CD4-positive, alpha-beta memory T cell (primary cell): ENCODE measurements at regions of chr3 and their contacts with region 1.

Region 1: GRCh38 chr3:100334488-100335351 is at the start of gene NIT2:
- DNase-seq: peak; percentile 74 to 80 (median 75)
- H3K4me3 ChIP-seq: peak within 1 kb of the TSS; percentile 54 to 71
- H3K4me3 Mint-ChIP-seq: peak within 1 kb of the TSS; percentile 89 to 96 (median 96)
- H3K27ac ChIP-seq: peak within 1 kb of the TSS; percentile 67
- H3K27ac Mint-ChIP-seq: peak within 1 kb of the TSS; percentile 83 to 97 (median 95)
- H3K4me1 ChIP-seq: peaks cover 14% of the 10 kb centered on the region
- H3K4me1 Mint-ChIP-seq: peaks cover 16 to 40% (median 18%) of the 10 kb centered on the region in 4 donors
- H3K27me3 ChIP-seq: no peaks in the 10 kb centered on the region
- H3K27me3 Mint-ChIP-seq: no peaks in the 10 kb centered on the region
- total RNA-seq, gene NIT2: 30.5 to 32.6 TPM

Region 2: DNA sequence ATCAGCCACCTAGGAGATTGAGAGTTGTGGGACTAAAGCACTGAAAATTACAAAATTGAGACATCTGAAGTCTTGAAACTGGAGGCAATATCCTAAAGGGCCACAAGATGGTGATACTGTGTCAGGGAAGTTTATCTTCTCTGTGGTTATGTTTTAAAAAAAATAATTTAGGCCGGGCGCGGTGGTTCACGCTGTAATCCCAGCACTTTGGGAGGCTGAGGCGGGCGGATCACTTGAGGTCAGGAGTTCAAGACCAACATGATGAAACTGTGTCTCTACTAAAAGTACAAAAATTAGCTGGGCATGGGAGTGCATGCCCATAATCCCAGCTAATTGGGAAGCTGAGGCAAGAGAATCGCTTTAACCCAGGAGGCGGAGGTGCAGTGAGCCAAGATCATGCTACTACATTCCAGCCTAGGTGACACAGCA is 18.1 kb before region 1 on chr3:
- CTCF ChIA-PET with region 1: interaction called, 9 read pairs
- POLR2A ChIA-PET with region 1: interaction called, 3 read pairs
- intact Hi-C with region 1: loop called (anchors 2 kb)
- DNase-seq: peak; percentile 42 to 48 (median 44)
- H3K4me3 ChIP-seq: no peak overlapping the region
- H3K4me3 Mint-ChIP-seq: peak overlapping the region in 4 of 8 donors; percentile 23 to 50 (median 40)
- H3K27ac ChIP-seq: no peak overlapping the region
- H3K27ac Mint-ChIP-seq: peak overlapping the region in 6 of 7 donors; percentile 2 to 70 (median 60)
- H3K4me1 ChIP-seq: peaks cover 11% of the 10 kb centered on the region
- H3K4me1 Mint-ChIP-seq: peaks cover 5 to 17% (median 9%) of the 10 kb centered on the region in 4 donors
- H3K27me3 ChIP-seq: no peaks in the 10 kb centered on the region
- H3K27me3 Mint-ChIP-seq: no peaks in the 10 kb centered on the region

Region 3: GRCh38 chr3:100492059-100493006 is 157.6 kb after region 1 on chr3 and contains the start of gene TMEM45A:
- CTCF ChIA-PET with region 1: no interaction called
- POLR2A ChIA-PET with region 1: no interaction called
- intact Hi-C with region 1: loop called (anchors 10 kb)
- DNase-seq: peak; percentile 53 to 79 (median 72)
- H3K4me3 ChIP-seq: peak within 1 kb of the TSS; percentile 42 to 49
- H3K4me3 Mint-ChIP-seq: peak within 1 kb of the TSS; percentile 69 to 89 (median 86)
- H3K27ac ChIP-seq: peak within 1 kb of the TSS; percentile 26
- H3K27ac Mint-ChIP-seq: peak within 1 kb of the TSS in 6 of 7 donors; percentile 11 to 65 (median 36)
- H3K4me1 ChIP-seq: peaks cover 12% of the 10 kb centered on the region
- H3K4me1 Mint-ChIP-seq: peaks cover 5 to 15% (median 8%) of the 10 kb centered on the region in 4 donors
- H3K27me3 ChIP-seq: no peaks in the 10 kb centered on the region
- H3K27me3 Mint-ChIP-seq: peaks cover 5 to 8% of the 10 kb centered on the region in 2 donors
- total RNA-seq, gene TMEM45A: 0.23 TPM in 1 of 2 experiments, not detected in the other

Region 4: DNA sequence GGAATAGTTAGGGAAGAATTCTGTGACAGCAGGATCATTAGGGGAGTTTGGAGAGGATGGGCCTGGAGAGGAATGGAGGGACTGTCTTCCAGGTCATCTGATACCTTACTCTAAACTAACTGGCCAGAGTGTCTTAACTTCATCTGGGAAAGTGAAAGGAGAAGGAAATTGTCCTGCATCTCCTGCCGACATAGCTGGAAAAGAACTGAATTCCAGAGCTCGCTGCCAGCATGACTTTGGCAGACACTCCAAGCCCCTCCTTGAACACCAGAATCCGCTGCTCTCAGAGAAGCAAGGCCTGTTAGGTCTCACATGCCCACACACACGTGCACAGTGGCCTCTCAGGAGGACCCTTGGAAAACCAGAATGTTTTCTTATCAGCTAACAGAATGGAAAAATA is 648.0 kb after region 1 on chr3:
- CTCF ChIA-PET with region 1: no interaction called
- POLR2A ChIA-PET with region 1: no interaction called
- intact Hi-C with region 1: no loop called
- DNase-seq: no peak
- H3K4me3 ChIP-seq: no peak overlapping the region
- H3K4me3 Mint-ChIP-seq: no peak overlapping the region
- H3K27ac ChIP-seq: no peak overlapping the region
- H3K27ac Mint-ChIP-seq: no peak overlapping the region
- H3K4me1 ChIP-seq: no peaks in the 10 kb centered on the region
- H3K4me1 Mint-ChIP-seq: no peaks in the 10 kb centered on the region
- H3K27me3 ChIP-seq: no peaks in the 10 kb centered on the region
- H3K27me3 Mint-ChIP-seq: peaks cover 2 to 4% of the 10 kb centered on the region in 2 donors